Transverse colon (tissue), 4 donors: ENCODE measurements at regions of chr15 and their contacts with region 1.

Region 1: DNA sequence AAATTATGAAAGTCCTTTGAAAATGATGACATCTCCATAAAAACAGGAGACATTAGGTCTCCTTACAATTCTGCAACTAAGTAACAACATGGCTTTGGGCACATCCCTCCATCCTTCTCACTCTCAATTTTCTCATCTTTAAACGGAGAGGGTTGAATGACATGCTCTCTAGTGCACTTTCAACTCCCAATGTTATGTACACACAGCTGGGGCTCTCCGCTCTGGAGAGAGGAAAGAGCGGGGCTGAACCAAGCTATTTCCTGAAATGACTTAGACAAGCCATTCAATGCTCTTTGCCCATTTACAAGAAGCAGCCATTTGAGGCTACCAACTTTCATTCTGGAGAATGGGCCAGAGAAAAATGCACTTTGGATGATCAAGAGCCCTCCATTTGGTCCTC is 144.2 kb upstream of the BNIP2 start:
- DNase-seq: no peak
- H3K4me3 ChIP-seq: no peak overlapping the region
- H3K27ac ChIP-seq: no peak overlapping the region
- H3K4me1 ChIP-seq: no peaks in the 10 kb centered on the region
- H3K27me3 ChIP-seq: peaks cover 6% of the 10 kb centered on the region
- CTCF ChIP-seq: no peak
- EP300 ChIP-seq: no peak
- POLR2A ChIP-seq: no peak

Region 2: GRCh38 chr15:59751552-59752413 is 81.6 kb before region 1 on chr15:
- in situ Hi-C with region 1: no loop called
- intact Hi-C with region 1: loop called (anchors 5 kb)
- DNase-seq: no peak
- H3K4me3 ChIP-seq: no peak overlapping the region
- H3K27ac ChIP-seq: no peak overlapping the region
- H3K4me1 ChIP-seq: no peaks in the 10 kb centered on the region
- H3K27me3 ChIP-seq: peaks cover 15% of the 10 kb centered on the region
- CTCF ChIP-seq: no peak
- EP300 ChIP-seq: no peak
- POLR2A ChIP-seq: no peak

Region 3: DNA sequence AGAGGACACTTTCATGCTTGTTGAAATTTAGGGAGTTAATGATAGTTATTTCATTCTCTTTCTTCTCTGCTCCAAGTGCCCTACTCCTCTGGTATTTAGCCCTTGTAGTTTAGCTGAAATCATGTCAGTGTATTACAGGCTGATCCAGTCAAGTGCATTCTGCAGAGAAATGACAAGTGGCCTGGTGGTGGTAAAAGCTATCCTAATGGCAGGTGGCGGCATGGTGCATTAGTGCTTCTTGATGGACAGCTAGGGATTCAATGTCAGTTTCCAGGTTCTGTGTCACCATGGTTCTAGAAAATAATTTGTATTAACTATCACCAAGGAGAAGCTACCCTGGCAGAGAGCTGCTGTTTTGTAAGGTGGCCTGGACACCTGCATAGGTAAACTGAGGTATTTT is 54.3 kb before region 1 on chr15:
- in situ Hi-C with region 1: no loop called
- intact Hi-C with region 1: loop called (anchors 2 kb)
- DNase-seq: no peak
- H3K4me3 ChIP-seq: no peak overlapping the region
- H3K27ac ChIP-seq: no peak overlapping the region
- H3K4me1 ChIP-seq: no peaks in the 10 kb centered on the region
- H3K27me3 ChIP-seq: no peaks in the 10 kb centered on the region
- CTCF ChIP-seq: no peak
- EP300 ChIP-seq: no peak
- POLR2A ChIP-seq: no peak